Left ventricle myocardium inferior (tissue), 1 donor: ENCODE measurements at regions of chr2 and their contacts with region 1.

Region 1: GRCh38 chr2:64562148-64562784 is 38.1 kb downstream of the AFTPH start:
- DNase-seq: no peak
- H3K4me3 ChIP-seq: no peak overlapping the region
- H3K27ac ChIP-seq: no peak overlapping the region
- H3K4me1 ChIP-seq: peaks cover 10% of the 10 kb centered on the region
- H3K27me3 ChIP-seq: no peaks in the 10 kb centered on the region
- CTCF ChIP-seq: peak; percentile 56

Region 2: GRCh38 chr2:64504774-64505720 is 57.2 kb before region 1 on chr2:
- intact Hi-C with region 1: no loop called
- DNase-seq: no peak
- H3K4me3 ChIP-seq: no peak overlapping the region
- H3K27ac ChIP-seq: no peak overlapping the region
- H3K4me1 ChIP-seq: no peaks in the 10 kb centered on the region
- H3K27me3 ChIP-seq: peaks cover 15% of the 10 kb centered on the region
- CTCF ChIP-seq: no peak

Region 3: DNA sequence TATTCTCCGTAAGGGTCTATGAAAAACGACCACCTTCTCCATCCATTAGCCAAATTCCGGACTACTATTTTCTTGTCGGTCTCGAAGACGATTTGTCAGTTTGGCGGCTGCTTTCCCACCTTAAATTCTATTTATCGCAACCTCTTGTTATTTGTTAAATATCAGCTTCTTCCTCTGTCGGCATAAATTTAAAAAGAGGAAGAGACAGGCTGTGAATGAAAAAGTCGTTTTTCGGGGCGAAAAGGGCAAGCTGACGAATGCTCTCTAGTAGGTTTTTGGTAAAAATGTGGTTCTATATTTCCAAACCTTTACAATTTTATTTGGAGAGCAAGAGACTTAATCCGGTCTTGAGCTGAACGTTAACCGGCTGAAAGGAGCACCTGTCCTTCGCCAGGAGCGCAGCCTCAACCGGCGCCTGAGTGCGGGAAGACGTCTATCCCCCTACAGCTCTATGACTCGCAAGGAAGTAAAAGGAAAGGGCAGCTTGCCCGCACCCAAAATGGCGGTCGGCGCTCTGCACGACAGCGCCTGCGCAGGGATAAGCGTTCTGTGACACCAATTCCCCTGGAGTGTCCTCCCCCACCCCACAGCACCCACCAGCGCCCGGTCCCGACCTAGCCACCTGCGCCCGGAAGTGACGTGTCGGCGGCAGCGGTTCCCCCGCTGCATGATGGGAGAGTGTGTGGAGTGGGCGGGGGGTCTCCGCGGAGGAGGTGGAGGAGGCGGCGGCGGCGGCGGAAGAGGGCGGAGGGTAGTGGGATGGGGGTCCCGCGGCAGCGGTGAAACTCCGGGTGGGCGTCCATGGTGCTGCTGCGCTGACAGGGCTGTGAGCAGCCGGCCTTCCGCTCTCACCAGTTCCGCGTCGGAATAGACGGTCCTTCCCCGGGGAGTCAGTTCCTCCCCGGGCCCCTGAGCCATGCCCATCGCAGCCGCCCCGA is 38.3 kb before region 1 on chr2 and contains the start of gene AFTPH:
- intact Hi-C with region 1: loop called (anchors 2 kb)
- DNase-seq: peak; percentile 98
- H3K4me3 ChIP-seq: peak within 1 kb of the TSS; percentile 98
- H3K27ac ChIP-seq: peak within 1 kb of the TSS; percentile 97
- H3K4me1 ChIP-seq: peaks cover 57% of the 10 kb centered on the region
- H3K27me3 ChIP-seq: no peaks in the 10 kb centered on the region
- CTCF ChIP-seq: no peak
- total RNA-seq, gene AFTPH: 11.3 TPM

Region 4: DNA sequence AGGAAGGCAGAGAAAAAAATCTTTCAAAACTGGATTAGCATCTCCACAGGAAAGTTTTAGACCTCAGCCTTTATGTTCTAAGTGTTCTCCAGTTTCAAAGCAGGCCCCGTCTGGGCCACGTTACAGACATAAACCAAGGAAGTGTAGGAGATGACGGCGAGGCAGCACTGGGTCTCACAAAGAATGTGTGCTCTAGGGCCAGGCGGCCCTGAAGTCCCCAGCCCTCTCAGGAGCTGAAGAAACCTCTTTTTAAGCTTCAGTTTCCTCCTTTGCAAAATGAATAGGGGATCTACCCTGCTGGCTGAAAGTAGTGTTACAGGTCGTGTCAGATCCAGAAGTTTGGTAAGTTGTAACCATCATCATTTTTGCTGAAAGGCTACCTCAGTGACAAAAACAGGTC is 788.4 kb after region 1 on chr2:
- intact Hi-C with region 1: no loop called
- DNase-seq: no peak
- H3K4me3 ChIP-seq: no peak overlapping the region
- H3K27ac ChIP-seq: peak overlapping the region; percentile 42
- H3K4me1 ChIP-seq: peaks cover 64% of the 10 kb centered on the region
- H3K27me3 ChIP-seq: no peaks in the 10 kb centered on the region
- CTCF ChIP-seq: peak; percentile 16